ENCODE measurements at regions of chrX and their contacts with region 1.

Region 1: DNA sequence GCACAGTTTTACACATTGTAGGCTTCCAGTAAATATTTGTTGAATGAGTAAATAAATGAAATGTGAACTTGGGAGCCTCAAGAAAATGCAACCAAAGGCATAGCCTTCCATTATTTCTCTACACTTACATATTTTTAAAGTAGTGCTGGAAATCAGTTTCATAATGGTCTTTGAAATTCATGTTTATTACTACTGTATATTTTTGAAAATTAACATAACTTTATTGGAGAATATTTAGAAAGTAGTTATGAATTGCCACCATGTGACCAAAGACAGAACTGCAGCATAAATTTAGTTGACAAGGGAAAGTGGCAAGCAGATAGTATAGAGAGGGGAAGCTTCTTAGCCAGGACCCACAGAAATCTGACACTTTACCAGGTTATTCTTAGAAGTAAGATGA is 6.4 kb downstream of the TCEAL8 start:
- DNase-seq: peak in 1 of 3 donors; percentile 54
- ATAC-seq: no peak
- H3K4me3 ChIP-seq: no peak overlapping the region
- H3K4me1 ChIP-seq: no peaks in the 10 kb centered on the region
- CTCF ChIP-seq: no peak

Region 2: GRCh38 chrX:103214870-103215424 is 33.6 kb before region 1 on chrX and contains the start of gene BEX4:
- intact Hi-C with region 1: loop called in 1 of 2 experiments (anchors 5 kb)
- DNase-seq: peak; percentile 85 to 89 (median 86)
- ATAC-seq: peak; percentile 95
- H3K4me3 ChIP-seq: peak within 1 kb of the TSS; percentile 54
- H3K4me1 ChIP-seq: no peaks in the 10 kb centered on the region
- CTCF ChIP-seq: no peak
- total RNA-seq, gene BEX4: 7.8 to 34.0 (median 8.9) TPM

Measured in mucosa of descending colon (tissue), 3 donors.